Endothelial cell of umbilical vein (primary cell): ENCODE measurements at regions of chr5 and their contacts with region 1.

Region 1: DNA sequence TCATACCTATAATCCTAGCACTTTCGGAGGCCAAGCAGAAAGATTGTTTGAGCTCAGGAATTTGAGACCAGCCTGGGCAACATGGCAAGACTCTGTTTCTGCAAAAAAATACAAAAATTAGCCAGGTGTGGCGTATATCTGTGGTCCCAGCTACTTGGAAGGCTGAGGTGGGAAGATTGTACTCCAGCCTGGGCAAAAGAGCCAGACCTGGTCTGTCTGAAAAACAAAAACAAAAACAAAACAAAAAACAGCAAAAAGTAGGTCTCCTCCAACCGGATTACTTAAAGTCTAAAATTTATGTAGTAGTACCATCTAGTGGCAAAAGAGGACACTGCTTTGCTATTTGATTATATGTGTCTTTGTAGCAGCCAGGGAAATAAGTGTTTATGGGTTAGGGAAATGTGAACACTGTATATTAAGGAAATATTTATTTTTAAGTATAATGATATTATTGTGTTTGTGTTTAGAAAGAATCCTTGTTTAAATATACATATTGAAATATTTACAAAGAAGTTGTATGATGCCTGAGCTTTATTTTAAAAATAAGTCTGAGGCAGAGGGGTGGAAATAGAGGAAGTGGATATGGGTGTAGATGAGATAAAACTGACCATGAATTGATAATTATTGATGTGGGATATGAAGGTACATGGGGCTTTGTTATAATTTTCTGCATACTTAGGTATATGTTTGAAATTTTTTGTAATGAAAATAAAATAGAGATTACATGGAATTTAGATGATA is 20.0 kb downstream of the APC start:
- DNase-seq: peak; percentile 78
- H3K4me3 ChIP-seq: no peak overlapping the region
- H3K27ac ChIP-seq: no peak overlapping the region
- H3K4me1 ChIP-seq: peaks cover 3% of the 10 kb centered on the region
- H3K27me3 ChIP-seq: no peaks in the 10 kb centered on the region
- CTCF ChIP-seq: peak; percentile 49 to 50
- POLR2A ChIP-seq: no peak

Region 2: DNA sequence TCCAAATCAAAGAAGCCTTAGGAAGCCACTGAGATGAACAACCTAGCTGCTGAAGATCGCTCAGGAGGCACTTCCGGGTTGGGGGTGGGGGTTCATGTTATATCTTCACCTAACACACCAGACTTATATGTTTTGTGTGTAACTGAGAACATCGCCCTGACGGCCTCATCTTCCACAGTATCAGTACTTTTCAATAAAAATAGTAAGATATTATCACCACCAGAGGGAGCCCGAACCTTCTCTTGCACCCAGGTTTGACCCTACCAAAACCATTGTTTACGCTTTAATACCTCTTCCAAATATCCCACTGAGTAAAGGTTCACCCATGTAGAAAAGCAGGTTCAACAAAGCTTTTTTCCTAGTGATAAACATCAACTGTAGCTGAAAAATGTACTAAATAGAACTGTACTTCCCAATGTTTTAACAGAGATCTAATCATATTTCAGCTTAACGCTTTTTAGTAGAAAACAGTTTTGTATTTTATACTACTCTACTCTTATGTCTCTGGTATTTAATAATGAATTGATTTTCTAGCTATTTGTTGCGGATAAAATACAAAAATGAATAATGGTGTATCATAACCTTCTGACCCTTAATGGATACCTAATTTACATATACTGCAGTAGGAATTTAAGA is 582.6 kb before region 1 on chr5:
- CTCF ChIA-PET with region 1: interaction called, 10 read pairs
- POLR2A ChIA-PET with region 1: no interaction called
- dilution Hi-C with region 1: no loop called
- intact Hi-C with region 1: loop called (anchors 5 kb)
- DNase-seq: peak; percentile 58
- H3K4me3 ChIP-seq: no peak overlapping the region
- H3K27ac ChIP-seq: no peak overlapping the region
- H3K4me1 ChIP-seq: no peaks in the 10 kb centered on the region
- H3K27me3 ChIP-seq: no peaks in the 10 kb centered on the region
- CTCF ChIP-seq: peak; percentile 55 to 57
- POLR2A ChIP-seq: no peak

Region 3: DNA sequence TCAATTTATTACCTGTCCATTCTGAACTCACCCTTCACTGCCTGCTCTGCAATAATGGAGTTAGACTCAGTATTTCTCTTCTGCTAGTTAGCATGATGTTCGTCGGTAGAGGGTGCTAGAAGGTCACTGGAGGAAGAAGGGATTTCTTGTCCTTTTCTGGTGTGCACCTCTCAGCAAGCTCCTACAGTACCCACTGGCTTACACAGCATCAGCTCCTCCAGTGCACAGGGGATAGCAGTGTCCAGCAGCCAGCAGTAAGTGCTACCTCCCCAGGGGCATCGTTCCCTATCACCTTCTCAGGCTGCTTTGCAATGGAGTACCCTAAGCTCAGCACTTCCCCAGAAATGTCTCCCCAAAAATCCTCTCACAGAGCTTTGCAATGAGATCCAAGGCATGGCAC is 65.9 kb before region 1 on chr5:
- CTCF ChIA-PET with region 1: interaction called, 188 read pairs
- POLR2A ChIA-PET with region 1: no interaction called
- dilution Hi-C with region 1: no loop called
- intact Hi-C with region 1: loop called (anchors 1 kb)
- DNase-seq: peak; percentile 43
- H3K4me3 ChIP-seq: no peak overlapping the region
- H3K27ac ChIP-seq: no peak overlapping the region
- H3K4me1 ChIP-seq: no peaks in the 10 kb centered on the region
- H3K27me3 ChIP-seq: peaks cover 10 to 12% of the 10 kb centered on the region in 2 experiments
- CTCF ChIP-seq: peak; percentile 33 to 41
- POLR2A ChIP-seq: no peak

Region 4: DNA sequence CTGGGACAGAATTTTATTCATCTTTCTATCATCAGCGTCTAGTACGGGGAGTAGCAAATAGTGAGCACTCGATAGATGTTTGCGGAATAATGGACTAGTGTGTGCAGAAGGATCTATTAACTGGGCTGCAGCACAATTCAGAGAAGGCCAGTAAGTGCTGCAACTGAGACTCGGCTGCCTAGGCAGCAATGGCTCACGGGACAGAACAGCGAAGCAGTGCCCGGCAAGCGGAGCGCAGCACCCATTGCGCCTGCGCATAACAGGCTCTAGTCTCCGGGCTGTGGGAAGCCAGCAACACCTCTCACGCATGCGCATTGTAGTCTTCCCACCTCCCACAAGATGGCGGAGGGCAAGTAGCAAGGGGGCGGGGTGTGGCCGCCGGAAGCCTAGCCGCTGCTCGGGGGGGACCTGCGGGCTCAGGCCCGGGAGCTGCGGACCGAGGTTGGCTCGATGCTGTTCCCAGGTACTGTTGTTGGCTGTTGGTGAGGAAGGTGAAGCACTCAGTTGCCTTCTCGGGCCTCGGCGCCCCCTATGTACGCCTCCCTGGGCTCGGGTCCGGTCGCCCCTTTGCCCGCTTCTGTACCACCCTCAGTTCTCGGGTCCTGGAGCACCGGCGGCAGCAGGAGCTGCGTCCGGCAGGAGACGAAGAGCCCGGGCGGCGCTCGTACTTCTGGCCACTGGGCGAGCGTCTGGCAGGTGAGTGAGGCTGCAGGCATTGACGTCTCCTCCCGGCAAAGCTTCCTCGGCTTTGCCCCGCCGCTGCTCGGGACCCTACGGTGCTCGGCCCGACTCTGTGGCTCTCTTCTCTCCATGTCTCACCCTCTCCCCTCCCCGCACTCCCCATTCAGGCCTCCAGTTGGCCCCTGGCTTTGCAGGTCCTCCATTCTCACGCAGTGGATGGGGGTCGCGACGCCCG is 50.2 kb before region 1 on chr5:
- CTCF ChIA-PET with region 1: interaction called, 19 read pairs
- POLR2A ChIA-PET with region 1: no interaction called
- dilution Hi-C with region 1: no loop called
- intact Hi-C with region 1: loop called (anchors 5 kb)
- DNase-seq: peak; percentile 98
- H3K4me3 ChIP-seq: peak overlapping the region; percentile 19 to 86 (median 74)
- H3K27ac ChIP-seq: peak overlapping the region; percentile 40
- H3K4me1 ChIP-seq: peaks cover 26% of the 10 kb centered on the region
- H3K27me3 ChIP-seq: no peaks in the 10 kb centered on the region
- CTCF ChIP-seq: no peak
- POLR2A ChIP-seq: peak; percentile 97

Region 5: DNA sequence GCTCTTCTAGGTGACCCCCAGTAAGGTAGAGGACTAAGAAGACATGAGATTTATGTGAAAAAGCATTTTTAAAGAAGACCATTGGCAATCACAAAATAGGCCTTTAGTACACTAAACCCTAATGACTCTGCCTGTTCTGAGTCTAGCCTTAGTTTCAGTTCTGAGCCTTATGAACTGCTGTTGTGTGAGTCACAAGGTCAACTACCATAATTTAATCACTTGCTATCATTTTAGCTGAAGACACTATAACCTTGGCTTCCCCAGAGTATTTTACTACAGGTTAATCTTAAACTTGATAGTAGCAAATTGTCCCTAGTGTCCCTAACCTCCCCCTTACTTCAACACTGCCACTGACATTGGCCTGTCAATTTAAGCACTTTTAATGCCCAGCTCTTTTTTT is 14.5 kb after region 1 on chr5:
- CTCF ChIA-PET with region 1: interaction called, 12 read pairs
- POLR2A ChIA-PET with region 1: no interaction called
- dilution Hi-C with region 1: no loop called
- intact Hi-C with region 1: no loop called
- DNase-seq: no peak
- H3K4me3 ChIP-seq: no peak overlapping the region
- H3K27ac ChIP-seq: no peak overlapping the region
- H3K4me1 ChIP-seq: no peaks in the 10 kb centered on the region
- H3K27me3 ChIP-seq: no peaks in the 10 kb centered on the region
- CTCF ChIP-seq: no peak
- POLR2A ChIP-seq: no peak

Region 6: DNA sequence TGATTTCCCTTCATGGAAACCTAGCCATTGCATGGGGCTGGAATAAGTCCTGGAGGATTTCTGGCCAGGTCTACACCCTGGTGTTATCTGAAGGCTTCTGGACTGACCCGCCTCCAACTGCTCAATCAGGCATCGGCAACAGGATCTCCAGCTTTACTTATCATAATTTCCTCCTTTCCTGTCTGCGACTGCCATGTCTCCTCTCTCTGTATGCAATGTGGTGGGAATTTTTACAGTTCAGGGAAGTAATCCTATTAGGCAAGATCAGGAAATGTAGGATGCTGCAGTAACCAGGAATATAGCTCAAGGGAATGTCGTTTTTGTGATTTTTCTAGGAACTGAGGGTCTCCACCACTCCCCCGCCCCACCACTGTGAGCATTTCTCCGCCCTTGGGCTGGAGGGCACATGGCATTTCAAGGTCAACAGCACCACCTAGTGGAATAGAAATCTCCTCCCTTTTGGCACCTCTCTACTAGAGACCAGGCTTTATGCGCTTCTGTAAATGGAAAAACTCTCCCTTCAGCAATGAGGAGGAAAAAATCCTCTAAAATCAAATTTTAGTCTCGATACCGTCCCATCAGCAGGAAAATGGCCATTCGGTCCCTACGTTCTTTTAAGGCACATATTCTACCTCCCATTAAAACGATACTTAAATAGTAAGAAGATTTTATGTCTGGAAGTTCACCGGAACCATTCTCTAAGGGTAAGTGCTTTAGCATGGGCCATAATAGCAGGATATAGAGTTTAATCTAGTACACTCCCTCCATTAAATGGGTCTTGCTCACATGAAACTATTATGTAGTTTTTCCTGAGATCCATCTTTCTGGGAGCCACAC is 848.9 kb after region 1 on chr5:
- CTCF ChIA-PET with region 1: no interaction called
- POLR2A ChIA-PET with region 1: no interaction called
- dilution Hi-C with region 1: no loop called
- intact Hi-C with region 1: loop called (anchors 2 kb)
- DNase-seq: peak; percentile 82
- H3K4me3 ChIP-seq: peak overlapping the region in 2 of 3 experiments; percentile 23 to 60
- H3K27ac ChIP-seq: no peak overlapping the region
- H3K4me1 ChIP-seq: peaks cover 8% of the 10 kb centered on the region
- H3K27me3 ChIP-seq: no peaks in the 10 kb centered on the region
- CTCF ChIP-seq: peak; percentile 62 to 65
- POLR2A ChIP-seq: no peak